Ascending aorta (tissue), 2 donors: ENCODE measurements at regions of chr1 and their contacts with region 1.

Region 1: DNA sequence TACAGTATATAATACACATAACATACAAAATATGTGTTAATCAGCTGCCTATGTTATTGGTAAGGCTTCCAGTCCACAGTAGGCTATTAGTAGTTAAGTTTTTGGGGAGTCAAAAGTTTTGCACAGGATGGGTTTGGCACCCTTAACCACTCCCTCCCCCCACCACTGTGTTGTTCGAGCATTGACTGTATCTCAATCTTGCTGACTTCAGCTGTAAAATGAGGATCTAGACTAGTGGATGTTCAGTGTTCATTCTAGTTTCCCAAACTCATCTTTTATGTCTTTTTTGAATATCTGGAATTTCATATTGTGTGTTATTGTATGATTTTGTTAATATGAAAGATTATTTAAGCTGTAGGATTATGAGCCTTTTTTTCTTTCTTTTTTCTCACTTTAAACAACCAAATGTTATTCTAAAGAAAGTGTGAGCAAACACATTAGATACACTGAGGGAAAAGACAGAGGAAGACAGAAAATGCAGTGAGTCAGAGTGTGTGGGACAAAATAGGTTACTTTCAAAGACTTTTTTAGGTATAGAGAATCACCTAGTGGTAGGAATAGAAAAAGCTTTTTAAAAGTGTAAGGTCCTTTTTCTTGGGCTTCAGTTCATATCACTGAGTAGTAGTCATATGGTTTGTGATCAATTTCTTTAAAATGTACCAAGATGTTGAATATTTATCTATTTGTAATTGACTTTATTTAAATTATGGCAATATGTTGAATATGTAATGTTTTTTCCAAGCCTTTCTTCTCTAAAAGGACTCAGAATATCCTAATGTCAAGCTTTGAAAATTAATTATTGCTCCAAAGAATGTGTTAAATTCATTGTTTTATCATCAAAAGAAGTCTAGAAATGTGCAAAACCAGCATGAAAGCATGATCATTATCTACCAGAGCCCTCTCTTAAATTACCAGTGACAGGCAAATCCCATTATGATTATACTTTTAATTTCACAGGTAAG is 17.9 kb upstream of the CENPF start:
- DNase-seq: no peak
- H3K4me3 ChIP-seq: no peak overlapping the region
- H3K27ac ChIP-seq: no peak overlapping the region
- H3K4me1 ChIP-seq: peaks cover 0 to 5% of the 10 kb centered on the region in 2 donors
- H3K27me3 ChIP-seq: no peaks in the 10 kb centered on the region
- CTCF ChIP-seq: peak; percentile 57 to 66 (median 64)

Region 2: DNA sequence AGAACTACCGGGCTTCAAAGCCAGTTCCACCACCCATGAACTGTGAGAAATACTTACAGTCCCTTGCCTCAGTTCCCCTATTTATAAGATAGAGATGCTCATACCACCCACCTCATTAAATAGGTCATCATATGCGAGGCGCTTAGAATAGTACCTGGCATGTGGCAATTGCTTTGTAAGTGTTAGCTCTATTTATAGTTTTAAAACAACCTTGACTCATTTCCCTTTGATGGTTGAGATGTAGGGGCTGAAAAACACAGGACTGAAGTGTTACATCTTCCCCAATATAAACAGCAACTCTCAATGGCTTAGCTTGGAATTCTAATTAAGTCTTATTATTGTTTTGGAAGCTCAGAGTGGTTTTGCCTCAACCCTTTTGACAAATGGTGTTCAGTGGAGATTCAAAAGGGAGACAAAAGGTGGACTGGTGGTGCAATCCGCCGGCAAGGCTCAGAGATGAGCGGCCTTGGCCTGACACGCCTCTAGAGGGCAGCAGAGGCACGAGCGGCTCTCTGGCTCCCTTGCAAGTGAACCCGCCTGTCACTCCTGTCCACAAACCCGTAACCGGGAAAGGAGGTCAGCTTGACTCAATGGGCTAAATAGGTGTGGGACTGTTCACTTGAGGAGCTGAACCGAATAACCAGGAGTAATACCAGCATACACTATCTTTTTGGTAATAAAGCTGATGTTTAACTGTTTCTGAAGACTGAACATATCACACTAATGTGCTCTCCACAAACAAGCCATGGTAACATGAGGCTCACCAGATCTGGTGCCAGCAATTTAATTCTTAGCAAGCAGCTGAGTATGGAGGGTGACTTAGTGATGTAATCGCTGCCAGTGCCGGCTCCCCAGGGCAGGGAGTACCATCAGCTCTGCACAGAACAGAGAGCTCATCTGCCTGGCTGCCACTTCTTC is 323.6 kb before region 1 on chr1:
- intact Hi-C with region 1: loop called (anchors 5 kb)
- DNase-seq: peak in 1 of 2 donors; percentile 89
- H3K4me3 ChIP-seq: no peak overlapping the region
- H3K27ac ChIP-seq: no peak overlapping the region
- H3K4me1 ChIP-seq: no peaks in the 10 kb centered on the region
- H3K27me3 ChIP-seq: no peaks in the 10 kb centered on the region
- CTCF ChIP-seq: peak; percentile 82 to 93 (median 92)

Region 3: DNA sequence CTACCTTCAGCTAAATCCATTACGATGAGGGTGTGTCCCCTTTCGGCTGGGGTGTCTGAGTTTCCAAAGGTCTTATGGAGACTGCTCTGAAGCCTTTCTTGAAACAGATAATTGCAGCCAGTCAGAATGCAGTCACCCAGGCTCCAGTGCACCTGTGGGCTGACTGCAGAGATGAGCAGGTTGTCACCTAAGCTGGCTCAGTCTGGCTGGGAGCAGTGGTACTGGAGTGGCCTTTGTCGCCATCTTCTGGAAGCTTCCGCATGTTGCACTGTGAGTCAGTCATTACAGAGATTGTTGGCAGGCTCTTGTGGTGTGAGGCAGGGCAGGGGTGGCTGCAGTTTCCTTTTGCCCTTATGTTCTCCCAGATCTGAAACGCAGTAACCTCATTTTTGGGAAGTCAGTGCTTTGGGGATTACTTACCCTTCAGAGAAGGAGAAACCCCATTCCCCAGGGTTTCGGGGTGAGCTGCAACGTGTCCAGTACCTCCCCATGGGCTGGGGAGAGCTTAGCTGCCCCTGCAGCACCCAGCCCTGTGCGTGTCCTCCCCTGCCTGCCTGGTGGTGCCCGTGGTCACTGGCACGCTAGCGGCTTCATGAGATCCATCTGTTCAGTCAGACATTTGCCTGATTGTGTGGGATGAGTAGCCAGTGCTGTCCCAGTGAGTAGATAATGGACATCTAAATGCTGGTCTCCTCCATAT is 256.2 kb before region 1 on chr1:
- intact Hi-C with region 1: loop called (anchors 1 kb)
- DNase-seq: peak in 1 of 2 donors; percentile 84
- H3K4me3 ChIP-seq: no peak overlapping the region
- H3K27ac ChIP-seq: no peak overlapping the region
- H3K4me1 ChIP-seq: no peaks in the 10 kb centered on the region
- H3K27me3 ChIP-seq: no peaks in the 10 kb centered on the region
- CTCF ChIP-seq: peak; percentile 80 to 91 (median 89)

Region 4: DNA sequence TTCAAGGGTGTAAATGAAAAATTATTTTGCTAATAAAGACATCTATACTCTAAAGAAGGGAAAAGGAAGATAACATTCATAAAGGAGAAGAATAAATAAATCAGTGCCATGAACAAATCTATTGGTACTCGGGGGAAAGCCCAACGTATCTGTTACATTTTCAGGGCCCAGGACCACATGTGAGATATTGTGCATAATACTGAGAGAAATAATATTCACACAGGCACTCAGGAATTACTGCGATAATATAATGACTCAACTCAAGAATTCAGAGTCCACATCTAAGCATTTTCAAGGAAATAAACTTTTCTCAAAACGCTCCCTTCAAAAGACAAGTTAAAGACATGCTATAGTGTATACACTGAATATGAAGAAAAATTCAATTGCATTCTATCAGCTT is 195.4 kb before region 1 on chr1:
- intact Hi-C with region 1: loop called (anchors 2 kb)
- DNase-seq: no peak
- H3K4me3 ChIP-seq: no peak overlapping the region
- H3K27ac ChIP-seq: no peak overlapping the region
- H3K4me1 ChIP-seq: peaks cover 0 to 4% of the 10 kb centered on the region in 2 donors
- H3K27me3 ChIP-seq: no peaks in the 10 kb centered on the region
- CTCF ChIP-seq: no peak

Region 5: GRCh38 chr1:214764537-214764936 is 179.5 kb after region 1 on chr1:
- intact Hi-C with region 1: no loop called
- DNase-seq: no peak
- H3K4me3 ChIP-seq: no peak overlapping the region
- H3K27ac ChIP-seq: no peak overlapping the region
- H3K4me1 ChIP-seq: no peaks in the 10 kb centered on the region
- H3K27me3 ChIP-seq: no peaks in the 10 kb centered on the region
- CTCF ChIP-seq: no peak